ENCODE measurements at regions of chr10 and their contacts with region 1.

Region 1: DNA sequence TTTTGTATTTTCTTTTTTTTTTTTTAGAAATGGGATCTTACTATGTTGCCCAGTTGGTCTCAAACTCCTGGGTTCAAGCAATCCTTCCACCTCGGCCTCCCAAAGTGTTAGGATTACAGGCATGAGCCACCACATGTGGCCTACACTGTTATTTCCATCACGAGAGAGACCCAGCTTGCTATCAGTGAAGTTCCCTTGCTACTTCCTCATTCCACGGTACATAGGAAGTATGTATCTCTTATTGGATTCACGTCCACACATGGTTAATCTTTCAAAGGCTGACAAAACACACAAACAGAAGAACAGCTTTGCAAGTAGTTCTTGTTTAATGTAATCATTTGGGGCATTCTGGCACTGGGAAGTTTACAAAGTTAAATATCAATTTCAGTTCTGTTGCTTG is 50.9 kb downstream of the DCLRE1A start:
- DNase-seq: no peak
- ATAC-seq: peak; percentile 55; the same call in 2 of the 3 replicates
- H3K4me3 ChIP-seq: no peak overlapping the region
- H3K27ac ChIP-seq: no peak overlapping the region
- H3K4me1 ChIP-seq: peaks cover under 1% of the 10 kb centered on the region
- H3K27me3 ChIP-seq: no peaks in the 10 kb centered on the region; a peak in 1 of 4 replicates
- CTCF ChIP-seq: no peak
- EP300 ChIP-seq: no peak
- POLR2A ChIP-seq: no peak
- RAD21 ChIP-seq: no peak

Region 2: DNA sequence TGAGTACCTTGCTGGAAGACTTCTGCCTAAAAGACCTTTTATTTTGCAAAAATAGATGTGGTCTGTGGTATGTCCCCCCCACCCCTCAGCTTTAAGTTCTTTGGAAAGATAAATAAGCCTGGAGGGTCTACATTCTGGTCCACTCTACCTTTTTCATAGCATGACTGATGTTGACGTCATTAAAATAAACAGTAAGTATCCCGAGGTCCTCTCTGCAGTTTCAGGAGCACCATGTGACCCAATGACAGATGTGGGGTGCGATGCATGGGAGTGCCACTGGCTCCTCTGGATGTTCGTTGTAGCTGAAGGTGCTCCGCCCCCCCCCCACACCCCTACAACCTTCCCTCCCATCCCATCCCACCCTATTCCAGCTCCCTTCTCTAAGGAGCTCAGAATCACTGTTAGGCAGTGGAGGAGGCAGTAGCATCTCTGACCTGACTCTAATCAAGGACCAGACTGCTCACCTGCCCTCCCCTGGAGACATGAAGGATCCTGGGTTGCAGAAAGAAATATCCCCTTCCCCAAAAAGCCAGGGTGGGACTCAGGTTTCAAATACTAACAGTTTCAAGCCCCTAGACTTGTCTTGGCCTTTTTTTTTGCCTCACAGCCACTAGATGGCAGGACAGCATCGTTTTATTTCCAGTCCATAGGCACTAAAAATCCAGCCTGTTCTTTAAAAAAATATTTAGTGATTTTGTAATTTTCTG is 98.2 kb before region 1 on chr10:
- CTCF ChIA-PET with region 1: interaction called, 15 read pairs
- POLR2A ChIA-PET with region 1: no interaction called
- RAD21 ChIA-PET with region 1: interaction called, 14 read pairs
- SMC1A ChIA-PET with region 1: interaction called, 10 read pairs
- in situ Hi-C with region 1: no loop called
- intact Hi-C with region 1: loop called (anchors 5 kb)
- DNase-seq: no peak
- ATAC-seq: peak; percentile 86
- H3K4me3 ChIP-seq: no peak overlapping the region
- H3K27ac ChIP-seq: no peak overlapping the region
- H3K4me1 ChIP-seq: peaks cover 6% of the 10 kb centered on the region; the same call in 1 of the 2 replicates
- H3K27me3 ChIP-seq: no peaks in the 10 kb centered on the region
- CTCF ChIP-seq: peak; percentile 52 to 67 (median 66); a peak in 5 of 6 replicates
- EP300 ChIP-seq: no peak
- POLR2A ChIP-seq: no peak
- RAD21 ChIP-seq: peak; percentile 70

Region 3: GRCh38 chr10:113746217-113746957 is 56.6 kb before region 1 on chr10:
- CTCF ChIA-PET with region 1: no interaction called
- POLR2A ChIA-PET with region 1: no interaction called
- RAD21 ChIA-PET with region 1: no interaction called
- SMC1A ChIA-PET with region 1: no interaction called
- in situ Hi-C with region 1: no loop called
- intact Hi-C with region 1: no loop called
- DNase-seq: no peak
- ATAC-seq: no peak
- H3K4me3 ChIP-seq: no peak overlapping the region
- H3K27ac ChIP-seq: no peak overlapping the region
- H3K4me1 ChIP-seq: no peaks in the 10 kb centered on the region
- H3K27me3 ChIP-seq: no peaks in the 10 kb centered on the region
- CTCF ChIP-seq: no peak
- EP300 ChIP-seq: no peak
- POLR2A ChIP-seq: no peak
- RAD21 ChIP-seq: no peak

Region 4: GRCh38 chr10:113843972-113844485 is 41.0 kb after region 1 on chr10:
- CTCF ChIA-PET with region 1: interaction called, 9 read pairs
- POLR2A ChIA-PET with region 1: no interaction called
- RAD21 ChIA-PET with region 1: interaction called, 3 read pairs
- SMC1A ChIA-PET with region 1: interaction called, 10 read pairs
- in situ Hi-C with region 1: no loop called
- intact Hi-C with region 1: no loop called
- DNase-seq: no peak
- ATAC-seq: no peak; the same call in 2 of the 3 replicates
- H3K4me3 ChIP-seq: no peak overlapping the region
- H3K27ac ChIP-seq: no peak overlapping the region
- H3K4me1 ChIP-seq: peaks cover 4% of the 10 kb centered on the region; the same call in 1 of the 2 replicates
- H3K27me3 ChIP-seq: no peaks in the 10 kb centered on the region
- CTCF ChIP-seq: no peak
- EP300 ChIP-seq: no peak
- POLR2A ChIP-seq: no peak
- RAD21 ChIP-seq: no peak

Region 5: GRCh38 chr10:113993489-113993991 is 190.5 kb after region 1 on chr10:
- CTCF ChIA-PET with region 1: interaction called, 7 read pairs
- POLR2A ChIA-PET with region 1: no interaction called
- RAD21 ChIA-PET with region 1: interaction called, 3 read pairs
- SMC1A ChIA-PET with region 1: interaction called, 10 read pairs
- in situ Hi-C with region 1: no loop called
- intact Hi-C with region 1: no loop called
- DNase-seq: no peak
- ATAC-seq: no peak; the same call in 2 of the 3 replicates
- H3K4me3 ChIP-seq: no peak overlapping the region
- H3K27ac ChIP-seq: no peak overlapping the region
- H3K4me1 ChIP-seq: peaks cover 8% of the 10 kb centered on the region
- H3K27me3 ChIP-seq: peaks cover 0 to 1% of the 10 kb centered on the region in 2 experiments; a peak in 2 of 4 replicates
- CTCF ChIP-seq: 0 out of 6 replicates have a peak, but pooled peaks of 1 of the 3 experiments have one; percentile 13
- EP300 ChIP-seq: no peak
- POLR2A ChIP-seq: no peak
- RAD21 ChIP-seq: 0 out of 2 replicates have a peak, but pooled peaks have one; percentile 19

Region 6: GRCh38 chr10:114095559-114096337 is 292.8 kb after region 1 on chr10:
- CTCF ChIA-PET with region 1: interaction called, 295 read pairs
- POLR2A ChIA-PET with region 1: no interaction called
- RAD21 ChIA-PET with region 1: interaction called, 157 read pairs
- SMC1A ChIA-PET with region 1: interaction called, 291 read pairs
- in situ Hi-C with region 1: loop called (anchors 5 kb)
- intact Hi-C with region 1: no loop called
- DNase-seq: no peak
- ATAC-seq: peak; percentile 69
- H3K4me3 ChIP-seq: peak overlapping the region; percentile 31; the same call in 1 of the 2 replicates
- H3K27ac ChIP-seq: peak overlapping the region; percentile 50
- H3K4me1 ChIP-seq: peaks cover 47% of the 10 kb centered on the region
- H3K27me3 ChIP-seq: no peaks in the 10 kb centered on the region; a peak in 1 of 4 replicates
- CTCF ChIP-seq: no peak
- EP300 ChIP-seq: peak; percentile 33 to 49; a peak in 2 of 4 replicates
- POLR2A ChIP-seq: no peak
- RAD21 ChIP-seq: peak; percentile 18; the same call in 1 of the 2 replicates

Region 7: DNA sequence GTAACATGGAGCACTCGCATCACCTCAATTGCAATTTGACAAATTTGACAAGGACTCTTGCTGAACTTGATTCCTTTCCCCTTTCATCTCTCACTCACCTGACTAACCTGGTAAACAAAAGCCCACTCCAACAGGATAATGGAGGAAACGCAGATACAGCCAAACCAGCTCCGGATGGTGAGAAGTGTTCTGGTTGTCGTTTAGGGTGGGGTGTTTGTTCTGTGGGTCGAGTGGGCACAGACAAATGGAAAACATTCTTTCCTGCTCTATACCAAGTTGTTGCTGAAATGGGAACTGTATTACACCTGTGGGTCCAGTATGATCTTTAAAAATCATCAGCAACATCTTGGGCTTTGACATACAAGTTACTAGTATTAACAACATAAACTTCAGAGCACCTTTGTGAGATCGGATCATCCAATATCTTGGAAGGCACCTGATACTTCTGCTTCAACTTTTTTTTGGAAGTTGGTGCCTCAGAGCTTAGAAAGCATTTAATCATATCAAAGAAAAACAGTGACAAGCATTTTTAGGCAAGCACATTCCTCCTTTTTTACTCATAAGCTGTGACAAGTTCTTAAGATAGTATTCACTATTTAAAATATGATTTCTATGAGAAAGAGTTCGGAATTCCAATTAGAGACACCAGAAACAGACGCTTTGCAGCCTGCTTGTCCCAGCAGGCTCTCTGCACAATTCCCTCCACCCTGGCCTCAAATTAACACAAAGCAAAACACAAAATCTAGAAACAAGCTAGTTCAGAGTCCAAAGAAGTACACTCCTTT is 312.9 kb after region 1 on chr10:
- CTCF ChIA-PET with region 1: interaction called, 295 read pairs
- POLR2A ChIA-PET with region 1: no interaction called
- RAD21 ChIA-PET with region 1: interaction called, 4 read pairs
- SMC1A ChIA-PET with region 1: interaction called, 291 read pairs
- in situ Hi-C with region 1: no loop called
- intact Hi-C with region 1: no loop called
- DNase-seq: no peak
- ATAC-seq: no peak
- H3K4me3 ChIP-seq: no peak overlapping the region
- H3K27ac ChIP-seq: no peak overlapping the region
- H3K4me1 ChIP-seq: no peaks in the 10 kb centered on the region
- H3K27me3 ChIP-seq: peaks cover 0 to 4% of the 10 kb centered on the region in 2 experiments; a peak in 1 of 4 replicates
- CTCF ChIP-seq: no peak
- EP300 ChIP-seq: no peak
- POLR2A ChIP-seq: no peak
- RAD21 ChIP-seq: no peak

Region 8: DNA sequence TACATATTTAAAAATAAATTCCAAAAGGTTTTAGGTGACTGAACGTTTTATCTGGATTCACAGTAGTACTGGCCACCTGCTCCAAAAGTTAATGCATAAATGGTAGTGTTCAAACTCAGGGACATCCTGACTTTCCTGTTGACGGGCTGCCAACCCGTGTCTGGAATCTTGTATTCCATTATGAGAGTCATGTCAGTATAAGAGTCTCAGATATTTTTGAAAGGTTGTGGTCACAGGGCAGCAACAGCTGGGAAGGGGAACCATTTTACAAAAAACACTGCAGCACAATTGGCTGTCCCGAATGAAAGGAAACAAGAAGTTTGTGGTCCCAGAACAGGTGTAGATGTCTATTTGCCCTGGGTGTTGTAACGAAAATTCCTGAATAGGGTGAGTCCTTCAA is 379.0 kb after region 1 on chr10:
- CTCF ChIA-PET with region 1: no interaction called
- POLR2A ChIA-PET with region 1: no interaction called
- RAD21 ChIA-PET with region 1: no interaction called
- SMC1A ChIA-PET with region 1: no interaction called
- in situ Hi-C with region 1: no loop called
- intact Hi-C with region 1: no loop called
- DNase-seq: no peak
- ATAC-seq: no peak
- H3K4me3 ChIP-seq: no peak overlapping the region
- H3K27ac ChIP-seq: no peak overlapping the region
- H3K4me1 ChIP-seq: no peaks in the 10 kb centered on the region
- H3K27me3 ChIP-seq: no peaks in the 10 kb centered on the region
- CTCF ChIP-seq: no peak
- EP300 ChIP-seq: no peak
- POLR2A ChIP-seq: no peak
- RAD21 ChIP-seq: no peak